Activated CD4-positive, alpha-beta T cell treated with anti-CD3 and anti-CD28 coated beads for 36 hours (primary cell): ENCODE measurements at regions of chr1 and their contacts with region 1.

Region 1: GRCh38 chr1:245110406-245110805 is 44.4 kb upstream of the KIF26B start:
- DNase-seq: no peak
- ATAC-seq: no peak
- H3K4me3 Mint-ChIP-seq: no peak overlapping the region
- H3K27ac Mint-ChIP-seq: no peak overlapping the region
- H3K4me1 Mint-ChIP-seq: no peaks in the 10 kb centered on the region
- H3K27me3 Mint-ChIP-seq: no peaks in the 10 kb centered on the region

Region 2: GRCh38 chr1:246351721-246352120 is 1241.3 kb after region 1 on chr1:
- CTCF ChIA-PET with region 1: no interaction called
- POLR2A ChIA-PET with region 1: no interaction called
- intact Hi-C with region 1: loop called in 1 of 2 experiments (anchors 5 kb)
- DNase-seq: no peak
- ATAC-seq: no peak
- H3K4me3 Mint-ChIP-seq: no peak overlapping the region
- H3K27ac Mint-ChIP-seq: no peak overlapping the region
- H3K4me1 Mint-ChIP-seq: no peaks in the 10 kb centered on the region
- H3K27me3 Mint-ChIP-seq: no peaks in the 10 kb centered on the region